Activated T-helper 1 cell treated with anti-CD3 and anti-CD28 coated beads, Interleukin-12 subunit alpha, Interleukin-12 subunit beta, Interleukin-2, Interleukin-4 antibody, amounts not matched to agents 30 ng/mL and 10 ng/mL and 1 ng/mL, durations not matched to agents 14 hours and 24 hours and 36 hours (primary cell): ENCODE measurements at regions of chr6 and their contacts with region 1.

Region 1: DNA sequence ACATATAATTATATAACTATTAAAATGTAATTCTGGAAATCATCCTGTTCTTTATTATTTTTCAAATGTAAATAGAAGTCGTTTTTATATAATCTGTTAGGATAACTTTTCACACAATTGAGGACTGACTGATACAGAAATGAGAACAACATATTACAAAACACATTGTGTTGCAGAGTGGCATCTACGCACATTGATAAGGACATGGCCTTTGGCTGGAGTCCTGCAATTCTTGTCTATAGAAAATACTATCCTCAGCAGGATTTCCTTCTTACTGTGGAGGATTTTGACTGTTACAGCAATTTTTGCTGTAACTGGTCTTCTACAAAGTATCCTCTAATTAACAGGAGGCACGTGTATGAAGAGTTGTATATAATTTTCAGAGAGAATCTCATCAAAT is 19.8 kb downstream of the SH3BGRL2 start:
- DNase-seq: no peak
- H3K4me3 Mint-ChIP-seq: no peak overlapping the region
- H3K27ac Mint-ChIP-seq: no peak overlapping the region
- H3K4me1 Mint-ChIP-seq: no peaks in the 10 kb centered on the region
- H3K27me3 Mint-ChIP-seq: peaks cover 3% of the 10 kb centered on the region

Region 2: DNA sequence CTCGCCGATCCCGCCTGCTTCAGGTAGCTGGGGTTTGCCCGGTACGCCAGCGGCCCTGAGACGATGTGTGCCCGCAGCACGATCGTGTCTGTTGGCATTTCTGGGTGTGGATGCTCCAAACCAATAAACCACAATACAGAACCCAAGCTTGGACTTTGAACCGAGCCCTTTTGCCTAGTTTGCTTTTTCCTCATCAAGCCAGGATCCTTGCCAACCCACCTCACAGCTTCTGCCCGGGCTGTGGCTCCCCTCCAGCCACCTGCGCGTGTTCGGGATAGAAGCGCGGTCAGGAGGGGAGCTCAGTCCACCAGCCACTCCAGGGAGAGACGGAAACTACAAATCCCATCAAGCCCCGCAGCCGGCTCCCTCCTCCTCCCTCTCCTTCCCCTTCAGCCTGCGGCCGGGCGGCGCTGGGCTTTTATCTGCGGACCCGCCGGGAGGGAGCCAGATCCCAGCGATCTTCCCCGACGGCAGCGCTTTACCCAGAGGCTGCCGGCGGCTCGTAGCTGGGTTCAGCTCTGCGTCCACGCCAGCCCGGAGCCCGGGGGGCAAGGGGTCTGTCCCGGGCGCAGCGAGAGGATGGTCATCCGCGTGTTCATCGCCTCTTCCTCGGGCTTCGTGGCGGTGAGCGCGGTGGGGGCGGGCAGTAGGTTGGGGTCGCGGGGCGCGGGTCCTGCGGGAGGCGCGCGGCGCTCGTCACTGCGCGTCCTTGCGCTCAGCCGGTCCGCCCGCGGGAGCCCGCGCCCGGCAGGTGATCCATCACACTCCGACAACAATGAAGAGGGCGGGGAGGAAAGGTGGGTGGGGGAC is 19.9 kb before region 1 on chr6 and contains the start of gene SH3BGRL2:
- intact Hi-C with region 1: loop called (anchors 1 kb)
- DNase-seq: no peak
- H3K4me3 Mint-ChIP-seq: peak within 1 kb of the TSS; percentile 83
- H3K27ac Mint-ChIP-seq: no peak within 1 kb of the TSS
- H3K4me1 Mint-ChIP-seq: peaks cover 10% of the 10 kb centered on the region
- H3K27me3 Mint-ChIP-seq: peaks cover 63% of the 10 kb centered on the region
- total RNA-seq, gene SH3BGRL2: 0.05 and 0.13 TPM in 2 replicates